Dorsolateral prefrontal cortex (tissue), 120 donors: ENCODE measurements at regions of chr9 and their contacts with region 1.

Region 1: DNA sequence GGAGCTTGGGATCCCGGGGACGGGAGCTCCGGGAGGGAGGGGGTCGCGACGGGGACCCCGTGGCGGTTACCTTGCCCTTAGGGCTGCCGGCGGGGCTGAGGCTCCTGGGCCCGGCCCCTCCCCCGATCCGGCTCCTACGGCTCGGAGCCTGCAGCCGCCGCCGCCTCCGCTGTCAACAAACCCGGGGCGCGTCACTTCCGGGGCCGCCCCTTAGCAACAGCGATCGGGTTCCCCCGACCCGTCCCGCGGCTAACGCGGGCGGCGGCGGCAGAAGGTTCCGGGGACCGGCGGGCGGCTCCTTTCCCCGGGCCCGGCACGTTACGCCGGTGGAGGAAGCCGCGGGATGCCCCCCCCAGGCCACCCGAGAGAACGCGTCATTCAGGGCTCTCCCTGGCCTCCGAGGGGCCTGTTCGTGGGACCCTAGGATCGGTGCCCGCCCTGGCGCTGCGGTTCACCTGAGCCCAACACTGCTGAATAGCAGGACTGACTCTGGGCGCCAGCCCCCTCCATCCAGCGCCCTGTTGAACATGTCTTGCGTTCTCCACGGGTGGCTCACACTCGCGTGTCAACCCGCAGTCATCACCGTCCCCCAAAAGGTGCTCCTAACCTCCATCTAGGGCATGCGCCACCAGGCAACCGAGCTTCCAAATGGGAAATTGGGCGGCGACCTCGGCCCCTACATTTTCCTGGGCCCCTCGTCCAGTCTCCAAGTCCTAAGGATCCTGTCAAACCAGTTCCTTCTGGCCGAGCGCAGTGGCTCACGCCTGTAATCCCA is at the start of gene ZER1:
- DNase-seq: peak; percentile 89 to 97 (median 93)
- H3K4me3 ChIP-seq: peak within 1 kb of the TSS; percentile 65 to 99 (median 93)
- H3K27ac ChIP-seq: peak within 1 kb of the TSS; percentile 65 to 98 (median 94)
- H3K27me3 ChIP-seq: no peaks in the 10 kb centered on the region
- CTCF ChIP-seq: peak in 42 of 56 donors; percentile 6 to 59 (median 28)
- total RNA-seq, gene ZER1: 87.6 to 198 (median 135) TPM

Region 2: DNA sequence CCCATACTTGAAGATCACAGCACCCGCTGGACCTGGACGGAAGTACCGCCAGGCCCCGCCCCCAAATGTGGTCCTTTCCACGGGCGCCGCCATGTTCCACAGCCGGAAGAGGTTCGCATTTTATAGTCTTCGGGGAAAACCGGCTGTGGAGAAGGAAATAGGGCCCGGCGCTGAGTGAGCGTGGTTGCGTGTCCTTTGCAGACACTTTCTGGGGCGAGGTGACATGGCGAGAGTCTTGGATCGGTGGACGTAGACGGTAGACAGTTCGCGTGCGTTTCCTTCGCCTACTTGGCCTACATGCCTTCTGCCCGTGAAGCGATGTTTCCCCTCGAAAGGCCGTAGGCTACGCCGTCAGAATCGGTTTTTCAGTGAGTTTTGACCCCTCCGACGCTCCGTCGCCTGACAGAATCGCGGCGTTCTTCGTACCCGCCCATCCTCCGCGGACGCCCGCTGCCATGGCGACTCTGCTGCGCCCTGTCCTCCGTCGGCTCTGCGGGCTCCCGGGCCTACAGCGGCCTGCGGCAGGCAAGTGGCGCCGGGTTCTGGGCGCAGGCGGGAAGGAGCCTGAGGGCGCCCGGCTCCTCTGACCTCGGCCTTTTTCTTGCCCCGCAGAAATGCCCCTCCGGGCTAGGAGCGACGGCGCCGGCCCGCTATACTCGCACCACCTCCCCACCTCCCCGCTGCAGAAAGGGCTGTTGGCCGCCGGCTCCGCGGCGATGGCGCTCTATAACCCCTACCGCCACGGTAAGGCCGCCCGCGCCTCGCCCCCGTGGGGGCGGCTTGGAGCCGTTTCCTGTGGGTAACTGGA is 449.3 kb before region 1 on chr9 and contains the starts of genes COQ4 and TRUB2:
- intact Hi-C with region 1: loop called in 1 of 2 experiments (anchors 10 kb)
- DNase-seq: peak; percentile 89 to 96 (median 94)
- H3K4me3 ChIP-seq: peak within 1 kb of the TSS; percentile 68 to 100 (median 95)
- H3K27ac ChIP-seq: peak within 1 kb of the TSS; percentile 81 to 100 (median 98)
- H3K27me3 ChIP-seq: no peaks in the 10 kb centered on the region
- CTCF ChIP-seq: peak in 28 of 56 donors; percentile 2 to 57 (median 22)
- total RNA-seq, gene COQ4: 28.0 to 67.5 (median 47.0) TPM
- total RNA-seq, gene TRUB2: 20.6 to 66.5 (median 44.9) TPM

Region 3: DNA sequence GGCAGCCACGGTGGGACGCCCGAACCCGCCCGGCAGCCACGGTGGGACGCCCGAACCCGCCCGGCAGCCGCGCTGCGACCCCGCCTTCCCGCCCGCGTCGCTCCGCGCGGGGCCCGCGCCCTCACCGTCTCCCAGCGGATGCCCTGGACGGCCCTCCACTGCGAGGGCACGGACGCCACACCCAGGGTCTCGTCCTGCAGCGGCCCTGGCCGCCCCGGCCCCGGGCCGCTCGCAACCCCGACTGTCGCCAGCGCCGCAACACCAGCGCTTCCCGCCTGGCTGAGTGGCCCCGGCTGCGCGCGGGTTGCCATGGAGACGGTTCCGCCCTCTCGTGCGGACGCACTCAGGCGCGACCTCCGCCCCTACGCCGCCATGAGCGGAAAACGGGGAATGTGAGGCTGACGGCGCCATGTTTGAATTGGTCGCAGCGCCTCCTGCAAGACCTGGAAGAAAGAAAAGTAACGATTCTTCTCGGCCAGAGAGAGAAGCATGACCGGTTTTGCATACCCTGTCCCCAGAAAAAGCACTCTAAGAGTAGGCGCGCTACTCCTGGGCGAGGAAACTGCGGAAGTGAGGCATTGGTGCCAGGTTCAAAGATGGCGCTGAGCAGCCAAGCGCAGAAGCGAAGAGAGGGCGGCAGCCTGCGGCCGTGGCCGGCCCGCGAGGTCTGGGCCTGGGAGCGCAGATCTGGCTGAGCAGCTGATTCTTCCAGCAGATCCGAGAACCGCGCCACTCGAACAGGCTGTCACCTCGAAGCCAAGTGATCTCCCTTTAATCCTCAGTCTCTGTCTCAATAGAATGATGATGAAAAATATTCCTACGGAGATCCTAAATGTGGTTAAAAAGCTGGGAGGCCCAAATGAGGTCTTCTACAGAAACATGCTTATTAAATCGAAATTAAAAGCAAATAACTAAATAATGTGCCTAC is 115.3 kb before region 1 on chr9 and contains the start of gene DYNC2I2:
- intact Hi-C with region 1: loop called in 1 of 2 experiments (anchors 5 kb)
- DNase-seq: peak; percentile 90 to 97 (median 95)
- H3K4me3 ChIP-seq: peak within 1 kb of the TSS; percentile 54 to 93 (median 77)
- H3K27ac ChIP-seq: peak within 1 kb of the TSS; percentile 95 to 100 (median 100)
- H3K27me3 ChIP-seq: no peaks in the 10 kb centered on the region
- CTCF ChIP-seq: peak in 38 of 56 donors; percentile 7 to 65 (median 32)
- total RNA-seq, gene DYNC2I2: 9.3 to 27.2 (median 15.5) TPM

Region 4: DNA sequence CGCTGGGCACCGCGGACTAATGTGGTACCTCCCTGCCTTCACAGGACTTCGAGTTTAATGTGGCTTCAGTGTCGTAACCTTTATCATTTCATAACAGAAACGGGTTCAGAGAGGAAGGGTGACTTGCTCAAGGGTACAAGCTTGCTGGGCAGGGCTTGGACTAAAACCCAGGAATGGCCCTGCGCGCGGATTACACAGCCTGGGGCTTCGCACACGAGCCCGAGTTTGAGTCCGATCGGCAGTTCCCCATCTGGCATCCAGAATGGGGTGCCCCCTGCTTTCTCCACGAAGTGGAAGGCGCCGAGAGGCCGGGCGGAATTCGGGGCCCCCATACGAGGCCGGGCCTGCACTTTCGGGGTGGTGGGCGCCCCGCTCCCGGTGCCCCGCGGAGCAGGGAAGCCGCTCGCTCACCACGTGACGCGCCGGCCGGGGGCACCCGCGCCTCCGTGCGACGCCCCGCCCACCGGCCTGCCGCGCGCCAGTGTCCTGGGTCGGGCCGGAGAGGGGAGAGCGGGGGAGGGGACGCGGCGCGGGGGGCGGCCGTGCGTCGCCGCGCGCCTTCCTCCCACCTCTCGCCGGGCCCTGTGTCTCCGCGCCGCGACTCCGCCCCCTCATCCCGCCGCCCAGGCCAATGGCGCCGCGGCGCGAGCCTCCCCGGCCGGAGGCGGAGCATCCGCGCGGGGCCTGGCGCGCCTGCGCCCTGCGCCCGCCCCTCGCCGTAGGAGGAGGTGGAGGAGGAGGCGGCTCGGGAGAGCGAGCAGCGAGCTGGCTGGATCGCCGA is 83.2 kb before region 1 on chr9 and contains the start of gene SET:
- intact Hi-C with region 1: no loop called
- DNase-seq: peak; percentile 78 to 94 (median 86)
- H3K4me3 ChIP-seq: peak within 1 kb of the TSS; percentile 64 to 97 (median 83)
- H3K27ac ChIP-seq: peak within 1 kb of the TSS; percentile 76 to 99 (median 96)
- H3K27me3 ChIP-seq: peaks cover 0 to 10% (median 0%) of the 10 kb centered on the region in 45 donors
- CTCF ChIP-seq: peak in 12 of 56 donors; percentile 1 to 33 (median 11)
- total RNA-seq, gene SET: 147 to 261 (median 187) TPM

Region 5: GRCh38 chr9:128723866-128724743 is 47.8 kb before region 1 on chr9 and contains the start of gene ZDHHC12:
- intact Hi-C with region 1: loop called in 1 of 2 experiments (anchors 5 kb)
- DNase-seq: peak; percentile 79 to 98 (median 92)
- H3K4me3 ChIP-seq: peak within 1 kb of the TSS; percentile 51 to 95 (median 73)
- H3K27ac ChIP-seq: peak within 1 kb of the TSS in 58 of 59 donors; percentile 3 to 90 (median 78)
- H3K27me3 ChIP-seq: no peaks in the 10 kb centered on the region
- CTCF ChIP-seq: peak in 10 of 56 donors; percentile 1 to 33 (median 16)
- total RNA-seq, gene ZDHHC12: 1.9 to 8.9 (median 4.8) TPM

Region 6: DNA sequence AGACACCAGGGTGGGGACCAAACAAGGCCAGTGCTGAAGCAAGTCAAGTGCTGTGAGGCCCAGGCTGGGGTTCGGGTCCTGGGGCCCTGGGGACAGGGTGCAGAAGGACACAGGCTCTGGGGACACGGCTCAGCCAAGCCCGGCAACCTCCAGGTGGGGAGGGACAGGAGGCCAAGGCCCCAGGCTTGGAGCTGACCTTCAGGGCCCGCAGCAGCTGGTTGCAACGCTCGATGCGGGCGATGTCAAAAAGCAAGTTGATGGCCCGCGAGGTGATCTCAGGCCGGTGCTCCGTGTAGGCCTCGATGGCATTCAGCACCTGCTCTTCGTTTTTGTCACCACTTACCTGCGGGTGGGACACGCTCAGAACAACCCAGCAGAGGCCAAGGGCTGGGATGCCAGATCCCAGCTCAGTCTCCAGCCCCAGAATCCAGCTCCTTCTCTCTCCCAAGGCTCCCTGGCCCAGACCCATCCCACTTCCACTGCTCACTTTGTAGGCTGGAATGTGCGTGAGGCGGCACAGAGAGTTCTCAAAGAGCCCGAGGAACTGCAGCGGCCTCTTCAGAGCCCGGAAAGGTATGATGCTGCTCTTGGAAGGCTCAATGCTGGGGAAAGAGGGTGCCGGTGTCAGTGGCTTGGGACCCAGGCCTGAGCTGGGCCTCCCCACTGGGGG is 20.9 kb before region 1 on chr9:
- intact Hi-C with region 1: no loop called
- DNase-seq: no peak
- H3K4me3 ChIP-seq: no peak overlapping the region
- H3K27ac ChIP-seq: no peak overlapping the region
- H3K27me3 ChIP-seq: no peaks in the 10 kb centered on the region
- CTCF ChIP-seq: no peak

Region 7: DNA sequence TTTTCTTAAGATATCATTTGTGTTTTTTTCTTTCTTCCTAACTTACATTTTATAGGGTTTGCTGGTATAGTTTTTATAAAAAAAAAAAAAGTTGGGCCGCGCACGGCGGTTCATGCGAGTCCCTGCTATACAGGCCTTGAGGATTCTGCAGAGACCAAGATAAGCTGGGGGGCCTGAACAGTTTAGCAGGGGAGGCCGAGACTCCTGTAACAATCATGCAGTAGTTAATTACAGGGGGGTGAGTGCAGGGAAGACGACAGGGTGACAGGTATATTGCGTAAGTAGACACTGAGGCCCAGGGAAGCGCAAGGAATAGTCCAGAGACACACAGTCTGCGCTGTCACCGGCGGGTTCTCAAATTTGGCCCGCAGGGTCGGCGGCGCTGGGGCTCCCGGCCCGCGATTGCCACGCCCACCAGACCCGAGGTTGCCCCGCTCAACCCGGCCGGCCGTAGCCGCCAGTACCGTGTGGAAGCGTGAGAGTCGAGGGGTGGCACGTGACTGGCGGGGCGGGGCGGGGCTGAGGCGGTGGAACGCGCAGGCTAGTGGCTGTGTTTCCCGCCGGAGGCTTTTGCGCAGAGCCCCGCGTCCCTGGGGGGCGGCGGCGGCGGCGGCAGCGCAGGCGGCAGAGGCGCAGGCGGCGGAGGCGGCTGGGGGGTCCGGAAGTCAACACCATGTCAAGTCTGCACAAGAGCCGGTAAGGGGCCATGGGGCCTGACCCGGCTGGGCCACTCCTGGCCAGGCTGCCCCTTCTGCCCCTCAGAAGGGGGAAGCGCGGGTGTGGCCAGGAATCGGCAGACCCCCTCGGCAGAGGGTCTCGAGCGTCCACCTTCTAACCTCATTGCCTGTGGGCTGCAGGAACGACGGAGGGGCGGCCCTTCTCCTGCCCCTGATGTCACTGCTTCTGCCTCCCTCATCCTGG is 15.0 kb after region 1 on chr9 and contains the start of gene TBC1D13:
- intact Hi-C with region 1: loop called (anchors 2 kb)
- DNase-seq: peak; percentile 81 to 93 (median 88)
- H3K4me3 ChIP-seq: peak within 1 kb of the TSS; percentile 57 to 100 (median 98)
- H3K27ac ChIP-seq: peak within 1 kb of the TSS; percentile 66 to 97 (median 91)
- H3K27me3 ChIP-seq: no peaks in the 10 kb centered on the region
- CTCF ChIP-seq: peak in 41 of 56 donors; percentile 6 to 62 (median 34)
- total RNA-seq, gene TBC1D13: 32.1 to 59.0 (median 40.5) TPM

Region 8: GRCh38 chr9:128818099-128818838 is 46.3 kb after region 1 on chr9 and contains the start of gene ENDOG:
- intact Hi-C with region 1: loop called (anchors 5 kb)
- DNase-seq: peak; percentile 97 to 99 (median 98)
- H3K4me3 ChIP-seq: peak within 1 kb of the TSS; percentile 48 to 90 (median 74)
- H3K27ac ChIP-seq: peak within 1 kb of the TSS; percentile 36 to 95 (median 89)
- H3K27me3 ChIP-seq: no peaks in the 10 kb centered on the region
- CTCF ChIP-seq: peak; percentile 69 to 98 (median 90)
- total RNA-seq, gene ENDOG: 20.4 to 57.3 (median 35.8) TPM

Region 9: DNA sequence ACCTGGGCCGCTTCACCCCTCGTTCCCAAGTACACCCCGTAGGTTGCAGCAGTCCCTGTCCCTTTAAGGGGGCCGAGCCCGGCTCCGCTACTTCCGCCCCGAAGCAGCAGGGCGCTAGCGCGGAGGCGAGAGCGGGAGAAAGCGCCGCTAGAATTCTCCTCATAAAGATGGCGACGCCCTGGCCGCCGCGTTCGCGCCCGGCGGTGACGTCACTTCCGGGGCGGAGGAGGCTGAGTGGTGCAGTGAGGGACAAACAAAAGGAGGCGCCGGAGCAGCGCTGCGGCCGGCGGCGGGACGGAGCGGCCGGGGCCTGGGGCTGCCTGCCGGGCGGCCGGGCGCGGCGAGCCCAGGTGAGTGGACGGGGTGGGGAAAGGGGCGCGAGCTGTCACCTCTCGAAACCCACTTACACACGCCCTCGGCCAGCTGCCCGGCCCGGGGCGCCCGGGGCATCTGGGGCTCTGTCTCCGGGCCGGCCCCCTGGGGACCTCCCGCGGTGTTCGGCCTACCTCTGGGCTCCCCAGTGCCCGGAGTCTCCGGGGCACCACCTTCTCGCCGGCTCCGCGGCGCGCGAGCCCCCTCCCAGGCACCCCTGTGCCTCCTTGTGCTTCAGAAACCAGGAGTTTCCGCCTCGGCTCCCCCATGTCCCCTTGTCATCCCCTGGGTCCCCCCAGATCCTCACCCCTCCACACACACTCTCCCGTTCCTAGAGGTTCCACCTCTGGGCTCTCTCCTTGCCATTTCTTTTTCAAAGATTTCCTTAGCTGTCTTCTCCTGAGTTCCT is 110.2 kb after region 1 on chr9 and contains the starts of genes KYAT1 and LRRC8A:
- intact Hi-C with region 1: loop called in 1 of 2 experiments (anchors 2 kb)
- DNase-seq: peak; percentile 96 to 99 (median 97)
- H3K4me3 ChIP-seq: peak within 1 kb of the TSS; percentile 70 to 100 (median 96)
- H3K27ac ChIP-seq: peak within 1 kb of the TSS; percentile 91 to 100 (median 98)
- H3K27me3 ChIP-seq: no peaks in the 10 kb centered on the region
- CTCF ChIP-seq: peak in 33 of 56 donors; percentile 10 to 65 (median 35)
- total RNA-seq, gene KYAT1: 22.3 to 55.0 (median 36.5) TPM
- total RNA-seq, gene LRRC8A: 63.8 to 213 (median 95.1) TPM